ENCODE measurements at regions of chr3 and their contacts with region 1.

Region 1: DNA sequence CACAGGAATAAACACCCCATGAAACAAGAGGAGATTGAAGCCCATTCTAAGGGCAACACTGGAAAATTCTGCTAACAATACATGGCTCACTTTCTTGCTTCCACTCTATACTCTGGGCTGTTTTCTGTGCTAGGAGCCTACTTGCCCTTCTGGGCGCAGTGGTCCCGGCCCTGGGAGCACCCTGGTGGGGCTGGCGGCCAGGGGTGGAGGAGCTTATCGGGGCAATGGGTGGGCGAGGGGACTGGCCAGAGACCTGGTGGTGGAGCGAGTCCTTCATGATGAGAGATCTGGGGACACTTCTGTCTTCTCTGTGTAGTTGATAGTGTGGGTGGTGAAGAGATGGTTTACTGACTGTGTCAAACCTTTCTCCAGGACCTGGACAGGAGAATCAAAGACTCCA is 1128.5 kb downstream of the TBL1XR1 start:
- DNase-seq: no peak
- ATAC-seq: no peak
- H3K4me3 Mint-ChIP-seq: no peak overlapping the region
- H3K27ac Mint-ChIP-seq: no peak overlapping the region
- H3K4me1 Mint-ChIP-seq: no peaks in the 10 kb centered on the region
- H3K27me3 Mint-ChIP-seq: no peaks in the 10 kb centered on the region
- CTCF ChIP-seq: no peak

Region 2: GRCh38 chr3:176032043-176032442 is 36.7 kb before region 1 on chr3:
- CTCF ChIA-PET with region 1: no interaction called
- POLR2A ChIA-PET with region 1: no interaction called
- intact Hi-C with region 1: no loop called
- DNase-seq: no peak
- ATAC-seq: no peak
- H3K4me3 Mint-ChIP-seq: no peak overlapping the region
- H3K27ac Mint-ChIP-seq: no peak overlapping the region
- H3K4me1 Mint-ChIP-seq: no peaks in the 10 kb centered on the region
- H3K27me3 Mint-ChIP-seq: no peaks in the 10 kb centered on the region
- CTCF ChIP-seq: no peak

Region 3: GRCh38 chr3:176055836-176056235 is 12.9 kb before region 1 on chr3:
- CTCF ChIA-PET with region 1: no interaction called
- POLR2A ChIA-PET with region 1: no interaction called
- intact Hi-C with region 1: loop called (anchors 1 kb)
- DNase-seq: no peak
- ATAC-seq: no peak
- H3K4me3 Mint-ChIP-seq: no peak overlapping the region
- H3K27ac Mint-ChIP-seq: no peak overlapping the region
- H3K4me1 Mint-ChIP-seq: no peaks in the 10 kb centered on the region
- H3K27me3 Mint-ChIP-seq: no peaks in the 10 kb centered on the region
- CTCF ChIP-seq: no peak

Measured in activated CD8-positive, alpha-beta T cell treated with anti-CD3 and anti-CD28 coated beads for 36 hours (primary cell).